Activated CD4-positive, alpha-beta memory T cell treated with anti-CD3 and anti-CD28 coated beads for 36 hours (primary cell): ENCODE measurements at regions of chr5 and their contacts with region 1.

Region 1: GRCh38 chr5:174910245-174910737 is 185.9 kb downstream of the MSX2 start:
- DNase-seq: peak; percentile 75
- H3K4me3 Mint-ChIP-seq: no peak overlapping the region
- H3K27ac Mint-ChIP-seq: no peak overlapping the region
- H3K4me1 Mint-ChIP-seq: no peaks in the 10 kb centered on the region
- H3K27me3 Mint-ChIP-seq: peaks cover 13% of the 10 kb centered on the region

Region 2: GRCh38 chr5:174799121-174799520 is 111.2 kb before region 1 on chr5:
- CTCF ChIA-PET with region 1: no interaction called
- POLR2A ChIA-PET with region 1: no interaction called
- intact Hi-C with region 1: no loop called
- DNase-seq: no peak
- H3K4me3 Mint-ChIP-seq: no peak overlapping the region
- H3K27ac Mint-ChIP-seq: no peak overlapping the region
- H3K4me1 Mint-ChIP-seq: peaks cover 12% of the 10 kb centered on the region
- H3K27me3 Mint-ChIP-seq: peaks cover 36% of the 10 kb centered on the region

Region 3: DNA sequence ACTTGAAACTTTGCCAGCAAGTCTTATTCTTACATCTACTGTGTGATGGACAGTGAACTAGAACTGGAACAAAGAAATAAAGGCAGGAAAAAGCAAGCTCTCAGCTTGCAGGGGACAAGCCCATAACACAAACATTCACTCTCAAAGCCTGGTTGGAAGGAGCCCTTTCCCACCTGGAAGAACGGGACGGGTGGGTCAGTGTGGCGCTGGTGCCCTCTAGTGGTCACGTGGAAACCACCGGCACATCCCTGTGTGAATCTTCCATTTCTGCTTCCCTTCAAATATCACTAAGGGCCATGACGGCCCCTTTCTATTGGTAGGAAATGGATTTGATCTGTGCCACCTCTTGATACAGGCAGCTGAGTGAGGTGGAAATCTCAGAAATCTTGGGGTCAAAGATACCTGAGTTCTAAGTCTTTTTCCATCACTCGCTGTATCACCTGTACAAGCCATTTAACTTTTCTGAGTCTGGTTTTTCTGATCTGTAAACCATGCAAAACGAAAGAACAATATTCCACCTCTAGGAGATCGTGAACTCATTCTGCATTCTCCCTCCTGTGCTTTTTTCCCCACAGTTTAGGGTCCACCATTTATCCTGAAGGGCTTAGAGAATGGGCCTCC is 25.7 kb after region 1 on chr5:
- CTCF ChIA-PET with region 1: interaction called, 21 read pairs
- POLR2A ChIA-PET with region 1: no interaction called
- intact Hi-C with region 1: loop called (anchors 2 kb)
- DNase-seq: peak; percentile 51
- H3K4me3 Mint-ChIP-seq: no peak overlapping the region
- H3K27ac Mint-ChIP-seq: no peak overlapping the region
- H3K4me1 Mint-ChIP-seq: no peaks in the 10 kb centered on the region
- H3K27me3 Mint-ChIP-seq: peaks cover 25% of the 10 kb centered on the region

Region 4: GRCh38 chr5:175444060-175444904 is 534.0 kb after region 1 on chr5 and contains the start of gene DRD1:
- CTCF ChIA-PET with region 1: interaction called, 5 read pairs
- POLR2A ChIA-PET with region 1: no interaction called
- intact Hi-C with region 1: loop called (anchors 5 kb)
- DNase-seq: peak; percentile 59
- H3K4me3 Mint-ChIP-seq: peak within 1 kb of the TSS; percentile 51
- H3K27ac Mint-ChIP-seq: no peak within 1 kb of the TSS
- H3K4me1 Mint-ChIP-seq: peaks cover 10% of the 10 kb centered on the region
- H3K27me3 Mint-ChIP-seq: peaks cover 58% of the 10 kb centered on the region
- total RNA-seq, gene DRD1: not detected